GM10248 (cell line): ENCODE measurements at regions of chr15 and their contacts with region 1.

Region 1: GRCh38 chr15:55337160-55337559 is 18.1 kb downstream of the PIGB start:
- DNase-seq: no peak
- CTCF ChIP-seq: no peak

Region 2: DNA sequence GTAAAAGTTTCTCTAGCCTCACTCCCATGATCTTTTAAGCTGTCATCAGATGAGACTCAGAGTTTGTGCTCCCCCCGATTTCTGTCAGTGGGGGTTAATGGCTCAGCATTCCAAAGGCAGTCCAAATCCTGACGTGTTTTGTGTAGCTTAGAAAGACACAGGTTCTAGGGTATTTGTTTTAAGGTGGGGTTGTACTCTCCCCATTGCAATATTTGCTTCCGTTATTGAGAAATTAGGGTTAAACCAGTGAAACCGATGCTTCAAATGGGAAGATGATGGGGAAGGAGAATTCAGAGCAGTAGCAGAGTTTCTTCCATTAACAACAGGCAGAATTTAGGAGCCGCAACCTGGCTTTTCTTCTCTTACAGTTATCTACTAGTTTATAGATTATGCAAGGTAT is 14.7 kb before region 1 on chr15:
- CTCF ChIA-PET with region 1: interaction called, 13 read pairs
- POLR2A ChIA-PET with region 1: no interaction called
- DNase-seq: no peak
- CTCF ChIP-seq: no peak